Dendritic cell treated with granulocyte-macrophage colony-stimulating factor and Interleukin-4, amounts not matched to agents 40 ng/mL and 50 ng/mL, for 4 days (primary cell): ENCODE measurements at regions of chr6 and their contacts with region 1.

Region 1: GRCh38 chr6:169212897-169213813 is 40.5 kb downstream of the THBS2 start:
- H3K4me3 Mint-ChIP-seq: peak overlapping the region; percentile 72
- H3K27ac Mint-ChIP-seq: peak overlapping the region; percentile 91
- H3K4me1 Mint-ChIP-seq: peaks cover 17% of the 10 kb centered on the region
- H3K27me3 Mint-ChIP-seq: no peaks in the 10 kb centered on the region

Region 2: GRCh38 chr6:167826230-167826895 is 1386.8 kb before region 1 on chr6:
- intact Hi-C with region 1: loop called (anchors 10 kb)
- H3K4me3 Mint-ChIP-seq: peak overlapping the region; percentile 81
- H3K27ac Mint-ChIP-seq: peak overlapping the region; percentile 72
- H3K4me1 Mint-ChIP-seq: peaks cover 25% of the 10 kb centered on the region
- H3K27me3 Mint-ChIP-seq: peaks cover 71% of the 10 kb centered on the region

Region 3: DNA sequence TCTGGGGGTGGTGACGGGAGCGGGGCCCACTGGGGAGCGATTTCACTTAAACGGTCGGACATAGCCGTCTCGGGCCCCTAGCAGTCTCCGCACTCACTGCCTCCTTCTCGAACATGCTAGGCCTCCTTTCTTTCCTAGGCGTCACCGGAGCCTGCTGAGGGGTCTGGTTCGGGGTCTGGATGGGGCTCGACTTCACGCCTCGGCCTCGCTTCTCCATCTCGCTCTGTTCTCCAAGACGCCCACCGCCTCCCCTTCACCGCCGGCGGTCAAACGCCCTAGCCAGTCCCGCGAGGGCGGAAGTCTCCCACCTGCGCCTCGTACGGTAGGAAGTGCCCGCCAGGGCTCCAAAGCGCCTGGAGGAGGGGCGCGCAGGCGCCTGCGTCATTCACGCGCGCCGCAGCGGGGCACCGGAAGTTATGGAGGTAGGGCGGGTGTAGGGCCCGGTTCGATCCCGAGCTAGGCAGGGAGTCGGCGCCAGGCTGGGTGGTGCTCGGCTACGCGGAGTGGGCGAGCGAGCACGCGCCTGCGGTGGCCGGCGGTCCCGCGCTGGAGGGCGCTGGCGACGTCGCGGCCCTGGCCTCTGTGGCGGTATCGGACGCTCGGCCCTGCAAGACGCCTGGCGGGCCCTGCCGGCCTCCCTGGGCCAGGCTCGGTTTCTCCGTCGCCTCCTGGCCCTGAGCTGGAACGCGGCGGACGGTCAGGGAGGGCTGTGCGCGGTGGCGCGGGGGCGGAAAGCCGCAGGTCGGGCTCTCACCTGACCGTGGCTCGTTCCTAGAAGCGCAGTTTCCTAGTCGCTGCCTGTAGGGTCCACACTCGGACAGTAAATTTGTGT is 538.3 kb after region 1 on chr6 and contains the starts of genes DYNLT2 and ERMARD:
- intact Hi-C with region 1: loop called (anchors 2 kb)
- H3K4me3 Mint-ChIP-seq: peak within 1 kb of the TSS; percentile 90
- H3K27ac Mint-ChIP-seq: peak within 1 kb of the TSS; percentile 96
- H3K4me1 Mint-ChIP-seq: peaks cover 20% of the 10 kb centered on the region
- H3K27me3 Mint-ChIP-seq: no peaks in the 10 kb centered on the region